WTC11 (cell line): ENCODE measurements at regions of chr9 and their contacts with region 1.

Region 1: DNA sequence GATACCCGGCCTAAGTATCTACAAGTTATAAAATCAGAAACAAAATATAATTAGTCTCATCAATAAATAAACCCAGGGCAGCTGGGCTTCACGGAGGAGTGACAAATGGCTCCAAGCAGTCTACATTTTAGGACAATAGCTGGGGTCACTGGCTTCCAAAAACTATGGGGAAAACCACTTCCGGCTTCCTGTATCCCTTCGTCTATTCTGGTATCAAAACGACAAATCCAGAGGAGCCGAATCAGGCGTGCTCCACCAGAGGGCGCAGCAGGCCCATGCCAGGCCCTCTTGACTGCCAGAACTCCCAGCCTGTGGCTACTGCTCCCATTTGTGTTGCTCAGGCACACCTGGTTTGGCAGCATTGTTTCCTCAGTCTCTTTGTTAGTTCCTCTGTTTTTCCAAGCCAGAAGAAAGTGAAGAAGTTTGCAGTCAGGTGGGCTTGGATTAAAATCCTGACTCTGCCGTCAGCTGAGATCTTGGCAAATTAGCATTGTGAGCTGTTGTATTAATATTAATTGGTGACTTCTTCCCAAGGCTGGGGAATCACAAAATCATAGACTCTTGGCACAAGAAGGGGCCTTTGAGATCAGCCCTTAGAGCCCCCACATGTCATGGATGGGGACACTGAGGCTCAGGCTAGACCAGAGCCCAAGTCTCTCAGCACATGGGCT is 11.6 kb upstream of the RAB14 start:
- DNase-seq: peak; percentile 93
- ATAC-seq: peak; percentile 98
- H3K4me3 Mint-ChIP-seq: no peak overlapping the region
- H3K27ac Mint-ChIP-seq: no peak overlapping the region
- H3K4me1 Mint-ChIP-seq: peaks cover 10% of the 10 kb centered on the region
- H3K27me3 Mint-ChIP-seq: no peaks in the 10 kb centered on the region
- CTCF ChIP-seq: peak; percentile 84

Region 2: DNA sequence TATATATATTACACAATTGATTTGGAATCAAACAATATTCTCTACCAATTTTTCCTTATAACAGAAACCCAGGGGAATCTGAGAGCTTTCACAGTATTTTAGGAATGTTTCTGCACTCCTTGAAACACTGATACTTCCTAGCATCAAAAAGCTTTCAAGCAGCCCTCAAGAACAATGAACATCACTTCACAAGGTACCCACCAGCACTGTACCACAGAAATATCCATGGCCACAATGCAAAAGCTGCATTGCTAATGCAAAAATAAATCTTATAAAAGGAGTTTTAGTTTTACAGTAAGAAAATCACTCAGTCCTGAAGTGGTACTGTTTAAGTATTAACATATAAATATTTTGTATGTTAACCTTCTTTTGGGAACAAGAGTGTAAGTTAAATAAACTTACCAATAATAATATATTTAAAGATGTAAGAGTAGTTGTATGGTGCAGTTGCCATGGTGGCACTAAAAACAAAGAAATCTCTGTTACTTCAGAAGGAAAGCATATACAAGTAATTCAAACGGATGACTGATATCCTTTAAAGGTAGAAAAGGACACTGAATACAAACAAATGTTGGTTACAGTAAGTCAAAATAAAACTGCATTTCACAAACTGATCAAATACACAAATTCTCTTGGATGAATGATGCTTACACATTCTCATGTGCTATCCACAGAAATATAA is 20.2 kb before region 1 on chr9:
- CTCF ChIA-PET with region 1: no interaction called
- POLR2A ChIA-PET with region 1: no interaction called
- DNase-seq: no peak
- ATAC-seq: no peak
- H3K4me3 Mint-ChIP-seq: no peak overlapping the region
- H3K27ac Mint-ChIP-seq: no peak overlapping the region
- H3K4me1 Mint-ChIP-seq: peaks cover 29% of the 10 kb centered on the region
- H3K27me3 Mint-ChIP-seq: no peaks in the 10 kb centered on the region
- CTCF ChIP-seq: no peak

Region 3: GRCh38 chr9:121267689-121268597 is 54.7 kb after region 1 on chr9 and contains the start of gene GSN:
- CTCF ChIA-PET with region 1: interaction called, 32 read pairs
- POLR2A ChIA-PET with region 1: no interaction called
- DNase-seq: peak; percentile 84
- ATAC-seq: peak; percentile 77
- H3K4me3 Mint-ChIP-seq: peak within 1 kb of the TSS; percentile 83
- H3K27ac Mint-ChIP-seq: peak within 1 kb of the TSS; percentile 41
- H3K4me1 Mint-ChIP-seq: peaks cover 51% of the 10 kb centered on the region
- H3K27me3 Mint-ChIP-seq: peaks cover 57% of the 10 kb centered on the region
- CTCF ChIP-seq: no peak
- total RNA-seq, gene GSN: 47.0 to 57.3 TPM (median 54.9 TPM) in 3 replicates

Region 4: GRCh38 chr9:121299467-121300234 is 86.4 kb after region 1 on chr9:
- CTCF ChIA-PET with region 1: interaction called, 12 read pairs
- POLR2A ChIA-PET with region 1: no interaction called
- DNase-seq: peak; percentile 23
- ATAC-seq: peak; percentile 56
- H3K4me3 Mint-ChIP-seq: peak overlapping the region; percentile 74
- H3K27ac Mint-ChIP-seq: no peak overlapping the region
- H3K4me1 Mint-ChIP-seq: peaks cover 23% of the 10 kb centered on the region
- H3K27me3 Mint-ChIP-seq: peaks cover 21% of the 10 kb centered on the region
- CTCF ChIP-seq: no peak

Region 5: DNA sequence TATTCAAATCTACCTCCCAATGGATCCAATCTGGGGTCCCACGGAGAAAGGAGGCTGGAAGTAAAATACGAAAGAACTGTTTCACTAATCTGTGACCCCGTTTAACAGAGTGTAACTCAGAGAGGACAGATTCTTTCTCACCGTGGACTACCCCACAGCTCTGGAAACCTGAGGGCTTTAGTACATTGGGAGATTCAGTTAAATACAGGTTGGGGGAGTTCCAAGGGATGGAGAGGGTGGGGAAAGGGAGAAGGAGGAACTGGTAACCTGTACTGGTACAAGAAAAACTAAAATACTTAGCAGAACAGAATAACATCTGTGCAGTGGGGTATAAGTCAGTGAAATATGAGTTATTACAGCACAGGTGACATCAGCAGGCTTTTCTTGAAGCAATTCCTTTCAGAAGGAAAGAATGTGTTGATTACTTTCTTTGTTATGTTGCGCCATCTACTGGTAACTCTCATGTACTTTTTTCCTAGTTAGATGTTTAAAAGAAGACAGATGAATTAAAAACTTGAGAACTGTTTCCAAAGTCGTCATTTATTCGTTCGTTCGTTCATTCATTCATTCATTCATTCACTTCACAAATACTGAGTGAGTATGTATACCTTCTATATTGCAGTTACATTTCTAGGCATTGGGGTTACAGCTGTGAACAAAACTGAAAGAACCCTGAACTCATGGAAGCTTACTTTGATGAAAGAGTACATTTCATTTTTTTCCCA is 186.8 kb after region 1 on chr9:
- CTCF ChIA-PET with region 1: interaction called, 21 read pairs
- POLR2A ChIA-PET with region 1: no interaction called
- DNase-seq: no peak
- ATAC-seq: peak; percentile 47
- H3K4me3 Mint-ChIP-seq: no peak overlapping the region
- H3K27ac Mint-ChIP-seq: no peak overlapping the region
- H3K4me1 Mint-ChIP-seq: peaks cover 9% of the 10 kb centered on the region
- H3K27me3 Mint-ChIP-seq: no peaks in the 10 kb centered on the region
- CTCF ChIP-seq: peak; percentile 74